ENCODE measurements at regions of chr19 and their contacts with region 1.

Region 1: DNA sequence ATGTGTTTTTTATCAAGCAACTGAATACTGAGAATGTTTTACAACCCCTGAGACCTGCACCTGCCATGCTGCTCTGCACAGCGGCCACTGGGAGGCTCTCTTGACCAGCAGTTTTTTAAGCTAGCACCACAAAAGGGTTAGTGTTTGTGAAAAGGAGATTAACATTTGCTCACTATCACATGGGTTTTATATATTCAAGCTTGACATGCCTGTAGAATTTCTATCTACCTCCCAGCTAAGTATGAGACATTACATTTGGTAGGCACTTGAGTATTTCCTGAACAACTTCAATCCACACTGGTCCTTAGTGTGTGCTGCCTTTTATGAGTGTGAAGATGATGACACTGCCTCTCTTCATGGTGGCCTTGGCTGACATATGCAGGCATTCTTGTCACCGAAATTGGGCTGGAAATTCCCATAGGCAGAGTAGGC is 1238.9 kb downstream of the UQCRFS1 start:
- DNase-seq: peak; percentile 25
- ATAC-seq: peak; percentile 77
- H3K4me3 ChIP-seq: no peak overlapping the region
- H3K27ac ChIP-seq: no peak overlapping the region
- H3K4me1 ChIP-seq: no peaks in the 10 kb centered on the region
- H3K27me3 ChIP-seq: no peaks in the 10 kb centered on the region
- CTCF ChIP-seq: peak; percentile 49 to 58 (median 49); a peak in 5 of 6 replicates
- EP300 ChIP-seq: no peak
- POLR2A ChIP-seq: no peak
- RAD21 ChIP-seq: peak; percentile 83

Region 2: GRCh38 chr19:27993619-27994570 is 19.8 kb after region 1 on chr19:
- CTCF ChIA-PET with region 1: interaction called, 7 read pairs
- POLR2A ChIA-PET with region 1: interaction called, 4 read pairs
- RAD21 ChIA-PET with region 1: interaction called, 8 read pairs
- SMC1A ChIA-PET with region 1: interaction called, 28 read pairs
- in situ Hi-C with region 1: no loop called
- intact Hi-C with region 1: no loop called
- DNase-seq: no peak
- ATAC-seq: peak; percentile 57
- H3K4me3 ChIP-seq: no peak overlapping the region
- H3K27ac ChIP-seq: peak overlapping the region; percentile 25
- H3K4me1 ChIP-seq: no peaks in the 10 kb centered on the region; the same call in 1 of the 2 replicates
- H3K27me3 ChIP-seq: no peaks in the 10 kb centered on the region
- CTCF ChIP-seq: no peak
- EP300 ChIP-seq: no peak
- POLR2A ChIP-seq: no peak
- RAD21 ChIP-seq: no peak

Region 3: DNA sequence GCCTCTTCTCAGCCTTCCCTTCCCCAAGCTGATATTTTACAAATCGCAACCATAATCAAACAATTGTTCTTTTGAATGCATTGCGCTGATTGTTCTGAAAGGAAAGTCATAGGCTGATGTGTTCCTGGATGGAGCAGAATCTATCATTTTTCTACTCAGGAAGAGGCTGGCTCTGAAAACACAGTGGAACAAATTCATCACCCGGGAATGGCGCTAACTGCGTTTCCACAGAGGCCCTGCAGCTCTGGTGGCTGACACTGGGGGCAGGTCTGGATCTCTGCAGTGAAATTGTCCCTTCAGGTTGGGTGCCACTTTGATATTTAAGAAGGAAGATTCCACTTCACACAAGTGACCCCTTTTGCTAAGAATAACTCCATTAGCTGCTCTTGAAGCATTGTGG is 178.1 kb after region 1 on chr19:
- CTCF ChIA-PET with region 1: interaction called, 13 read pairs
- POLR2A ChIA-PET with region 1: no interaction called
- RAD21 ChIA-PET with region 1: interaction called, 6 read pairs
- SMC1A ChIA-PET with region 1: interaction called, 9 read pairs
- in situ Hi-C with region 1: no loop called
- intact Hi-C with region 1: no loop called
- DNase-seq: no peak
- ATAC-seq: no peak
- H3K4me3 ChIP-seq: no peak overlapping the region
- H3K27ac ChIP-seq: no peak overlapping the region
- H3K4me1 ChIP-seq: no peaks in the 10 kb centered on the region
- H3K27me3 ChIP-seq: no peaks in the 10 kb centered on the region
- CTCF ChIP-seq: no peak
- EP300 ChIP-seq: no peak
- POLR2A ChIP-seq: no peak
- RAD21 ChIP-seq: no peak

Region 4: GRCh38 chr19:28242297-28242927 is 268.3 kb after region 1 on chr19:
- CTCF ChIA-PET with region 1: interaction called, 11 read pairs
- POLR2A ChIA-PET with region 1: no interaction called
- RAD21 ChIA-PET with region 1: interaction called, 3 read pairs
- SMC1A ChIA-PET with region 1: interaction called, 7 read pairs
- in situ Hi-C with region 1: no loop called
- intact Hi-C with region 1: loop called (anchors 10 kb)
- DNase-seq: no peak
- ATAC-seq: no peak
- H3K4me3 ChIP-seq: no peak overlapping the region
- H3K27ac ChIP-seq: no peak overlapping the region
- H3K4me1 ChIP-seq: no peaks in the 10 kb centered on the region
- H3K27me3 ChIP-seq: no peaks in the 10 kb centered on the region
- CTCF ChIP-seq: peak; percentile 13 to 34 (median 23); a peak in 4 of 6 replicates
- EP300 ChIP-seq: no peak
- POLR2A ChIP-seq: no peak
- RAD21 ChIP-seq: peak; percentile 38

Region 5: DNA sequence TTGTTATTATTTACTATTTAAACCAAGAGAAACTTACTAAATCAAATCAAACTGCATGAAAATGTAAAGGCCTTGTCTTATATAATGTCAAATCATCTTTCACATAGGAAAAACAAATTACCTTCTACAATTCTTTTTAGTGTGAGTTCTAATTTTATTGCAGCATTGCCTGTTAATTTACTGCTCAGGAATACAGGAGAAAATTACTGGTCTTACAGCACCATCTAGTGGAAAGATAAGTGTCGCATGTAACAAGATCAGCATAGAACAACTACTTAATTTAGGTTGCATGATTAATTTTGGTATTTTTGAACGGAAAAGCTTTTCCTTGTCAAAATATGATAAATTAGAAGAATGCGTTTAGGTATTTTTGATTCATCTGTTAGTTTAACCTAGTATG is 736.2 kb after region 1 on chr19:
- CTCF ChIA-PET with region 1: no interaction called
- POLR2A ChIA-PET with region 1: no interaction called
- RAD21 ChIA-PET with region 1: interaction called, 3 read pairs
- SMC1A ChIA-PET with region 1: interaction called, 7 read pairs
- in situ Hi-C with region 1: loop called (anchors 25 kb)
- intact Hi-C with region 1: loop called (anchors 10 kb)
- DNase-seq: peak; percentile 3
- ATAC-seq: 0 out of 3 replicates have a peak, but pooled peaks have one; percentile 42
- H3K4me3 ChIP-seq: no peak overlapping the region
- H3K27ac ChIP-seq: no peak overlapping the region
- H3K4me1 ChIP-seq: no peaks in the 10 kb centered on the region
- H3K27me3 ChIP-seq: no peaks in the 10 kb centered on the region
- CTCF ChIP-seq: peak; percentile 46 to 56 (median 50); a peak in 5 of 6 replicates
- EP300 ChIP-seq: no peak
- POLR2A ChIP-seq: no peak
- RAD21 ChIP-seq: peak; percentile 66